ENCODE measurements at regions of chr13 and their contacts with region 1.

Region 1: GRCh38 chr13:111993691-111994090 is 73.3 kb upstream of the SOX1 start:
- DNase-seq: no peak
- H3K4me3 ChIP-seq: no peak overlapping the region
- CTCF ChIP-seq: no peak

Region 2: DNA sequence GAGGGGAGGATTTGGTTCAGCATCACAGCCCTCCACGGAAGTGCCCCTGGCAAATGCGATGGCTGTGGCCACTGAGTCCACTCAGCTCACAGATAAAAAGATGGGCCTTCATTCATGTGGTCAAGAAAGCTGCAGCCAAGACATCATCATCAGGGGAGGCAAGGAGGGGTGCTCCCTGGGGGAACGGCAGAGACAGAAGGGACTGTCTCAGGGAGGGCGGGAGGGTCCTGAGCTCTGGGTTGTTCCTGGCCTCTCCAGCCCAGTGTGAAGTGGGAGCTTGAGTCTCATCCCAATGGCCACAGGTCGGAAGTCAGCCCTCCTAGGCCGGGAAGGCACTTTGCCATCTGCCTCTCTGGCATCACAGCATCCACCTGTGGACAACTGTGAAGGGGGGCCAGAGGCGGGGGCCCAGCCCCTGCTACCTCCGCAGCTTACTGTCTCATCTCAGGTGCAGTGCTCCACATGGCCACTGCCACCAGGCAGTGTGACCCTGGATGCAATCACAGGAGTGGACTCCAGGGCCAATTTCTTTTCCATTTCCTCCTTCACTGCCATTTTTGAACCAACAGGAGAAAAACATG is 64.6 kb before region 1 on chr13:
- in situ Hi-C with region 1: no loop called
- DNase-seq: no peak
- H3K4me3 ChIP-seq: no peak overlapping the region
- CTCF ChIP-seq: no peak

Region 3: GRCh38 chr13:112092453-112092852 is 98.8 kb after region 1 on chr13:
- in situ Hi-C with region 1: loop called (anchors 5 kb)
- DNase-seq: no peak
- H3K4me3 ChIP-seq: no peak overlapping the region
- CTCF ChIP-seq: no peak

Measured in astrocyte of the cerebellum (primary cell).